Tibial artery (tissue), 4 donors: ENCODE measurements at regions of chr10 and their contacts with region 1.

Region 1: DNA sequence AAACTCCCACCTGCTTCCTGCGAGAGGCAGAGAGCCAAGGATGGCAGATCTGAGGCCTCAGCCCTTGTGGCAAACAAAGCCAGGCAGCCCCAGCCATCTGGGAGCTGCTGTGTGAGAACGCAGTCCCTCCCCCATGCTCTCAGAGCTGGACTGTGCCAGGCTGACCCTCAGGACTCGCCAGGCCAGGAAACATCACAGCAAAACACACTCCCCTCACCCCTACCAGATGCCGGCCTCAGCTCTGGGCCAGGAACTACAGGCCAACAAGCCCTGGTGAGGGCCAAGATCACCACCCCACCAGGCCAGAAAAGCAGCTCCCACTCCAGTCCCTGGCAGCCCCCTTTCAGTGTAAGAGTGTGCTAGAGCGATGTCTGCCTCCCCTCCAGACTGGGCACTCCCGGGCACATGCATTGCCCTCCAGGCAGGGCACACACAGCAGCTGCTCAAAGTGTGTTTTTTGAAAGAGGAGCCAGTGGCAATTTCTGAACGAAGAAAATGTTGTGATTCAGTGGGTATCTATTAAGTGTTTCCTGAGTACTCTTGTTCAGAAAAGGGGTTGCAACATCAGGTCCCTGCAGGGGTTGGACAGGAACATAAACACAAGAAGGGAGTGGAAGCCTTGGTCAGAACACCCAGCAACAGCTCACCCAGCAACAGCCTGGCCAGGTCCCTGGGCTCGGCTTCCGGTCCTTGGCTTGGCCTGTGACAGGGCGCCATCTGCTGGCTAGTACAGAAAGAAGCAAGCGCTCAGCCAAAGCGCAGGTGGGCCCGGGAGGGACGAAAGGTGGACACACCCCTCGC is 18.3 kb downstream of the LRRC20 start:
- DNase-seq: peak; percentile 96 to 97
- H3K4me3 ChIP-seq: peak overlapping the region; percentile 18 to 33
- H3K27ac ChIP-seq: peak overlapping the region; percentile 80 to 94
- H3K4me1 ChIP-seq: peaks cover 0 to 19% (median 14%) of the 10 kb centered on the region in 4 donors
- H3K27me3 ChIP-seq: no peaks in the 10 kb centered on the region
- CTCF ChIP-seq: peak; percentile 90 to 98

Region 2: GRCh38 chr10:70223728-70224127 is 140.4 kb before region 1 on chr10:
- intact Hi-C with region 1: loop called (anchors 2 kb)
- DNase-seq: no peak
- H3K4me3 ChIP-seq: no peak overlapping the region
- H3K27ac ChIP-seq: no peak overlapping the region
- H3K4me1 ChIP-seq: peaks cover 0 to 21% (median 1%) of the 10 kb centered on the region in 4 donors
- H3K27me3 ChIP-seq: no peaks in the 10 kb centered on the region
- CTCF ChIP-seq: no peak

Region 3: DNA sequence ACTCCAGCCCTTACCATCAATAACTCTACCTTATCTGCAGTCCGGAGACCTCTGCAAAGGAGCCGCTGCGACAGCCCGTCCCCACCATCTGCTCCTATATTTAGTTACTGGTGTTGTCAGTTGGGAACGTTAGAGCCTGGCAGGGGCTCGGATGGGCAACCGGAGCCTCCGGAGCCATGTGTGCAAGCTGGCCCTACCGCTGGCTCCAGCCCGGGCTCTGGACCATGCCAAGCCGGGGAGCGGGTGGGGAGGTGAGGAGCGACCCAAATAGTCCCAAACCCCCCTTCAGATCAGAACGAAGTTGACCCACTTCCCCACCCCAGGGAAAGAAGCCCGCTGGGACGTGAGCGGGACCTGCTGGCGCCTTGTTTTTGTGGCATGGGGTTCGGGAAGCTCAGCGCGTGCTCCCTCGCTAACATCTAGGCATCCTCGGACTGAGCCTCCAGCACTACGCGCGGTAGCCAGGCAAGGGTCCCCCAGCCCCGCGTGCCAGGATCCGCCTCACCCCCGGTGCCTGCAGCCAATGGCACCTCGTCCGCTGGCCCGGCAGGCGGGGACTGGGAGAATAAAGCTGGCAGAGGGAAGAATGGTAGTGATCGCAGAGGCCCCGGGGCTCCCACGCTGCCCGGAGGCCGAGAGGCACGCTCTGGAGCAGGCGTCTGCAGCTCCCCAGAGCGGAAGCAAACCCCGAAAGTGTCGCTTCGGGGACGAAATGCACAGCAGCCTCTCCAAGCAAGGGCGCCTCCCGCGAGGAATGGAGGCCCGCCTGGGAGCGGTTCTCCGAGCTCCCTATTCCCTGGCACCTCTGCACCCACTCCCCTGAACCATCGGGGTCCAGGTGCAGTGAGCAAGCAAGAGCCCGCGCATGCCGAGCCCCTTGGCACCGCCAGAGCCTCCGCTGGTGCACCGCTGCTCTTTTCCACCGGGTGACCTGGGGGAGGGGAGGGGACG is 17.6 kb after region 1 on chr10:
- intact Hi-C with region 1: no loop called
- DNase-seq: peak in 1 of 2 donors; percentile 72
- H3K4me3 ChIP-seq: peak overlapping the region; percentile 64 to 89
- H3K27ac ChIP-seq: peak overlapping the region; percentile 62 to 63
- H3K4me1 ChIP-seq: peaks cover 0 to 17% (median 6%) of the 10 kb centered on the region in 4 donors
- H3K27me3 ChIP-seq: no peaks in the 10 kb centered on the region
- CTCF ChIP-seq: no peak